ENCODE measurements at regions of chr14 and their contacts with region 1.

Region 1: GRCh38 chr14:60248697-60249318 is at the start of gene PPM1A:
- DNase-seq: peak; percentile 94 to 95
- H3K4me3 ChIP-seq: peak within 1 kb of the TSS; percentile 97
- H3K4me3 Mint-ChIP-seq: peak within 1 kb of the TSS; percentile 96
- H3K27ac Mint-ChIP-seq: peak within 1 kb of the TSS; percentile 99
- H3K4me1 ChIP-seq: peaks cover 30% of the 10 kb centered on the region
- H3K4me1 Mint-ChIP-seq: peaks cover 30% of the 10 kb centered on the region
- H3K27me3 ChIP-seq: no peaks in the 10 kb centered on the region
- H3K27me3 Mint-ChIP-seq: no peaks in the 10 kb centered on the region
- CTCF ChIP-seq: no peak
- total RNA-seq, gene PPM1A: 34.9 and 35.6 TPM in 2 replicates

Region 2: GRCh38 chr14:60188115-60188514 is 60.7 kb before region 1 on chr14:
- CTCF ChIA-PET with region 1: no interaction called
- POLR2A ChIA-PET with region 1: no interaction called
- intact Hi-C with region 1: no loop called
- DNase-seq: no peak
- H3K4me3 ChIP-seq: no peak overlapping the region
- H3K4me3 Mint-ChIP-seq: no peak overlapping the region
- H3K27ac Mint-ChIP-seq: no peak overlapping the region
- H3K4me1 ChIP-seq: no peaks in the 10 kb centered on the region
- H3K4me1 Mint-ChIP-seq: no peaks in the 10 kb centered on the region
- H3K27me3 ChIP-seq: no peaks in the 10 kb centered on the region
- H3K27me3 Mint-ChIP-seq: peaks cover 2% of the 10 kb centered on the region
- CTCF ChIP-seq: no peak

Region 3: GRCh38 chr14:60276342-60276741 is 27.5 kb after region 1 on chr14:
- CTCF ChIA-PET with region 1: interaction called, 3 read pairs
- POLR2A ChIA-PET with region 1: interaction called, 22 read pairs
- intact Hi-C with region 1: loop called (anchors 1 kb)
- DNase-seq: peak in 1 of 2 experiments; percentile 14
- H3K4me3 ChIP-seq: no peak overlapping the region
- H3K4me3 Mint-ChIP-seq: peak overlapping the region; percentile 30
- H3K27ac Mint-ChIP-seq: no peak overlapping the region
- H3K4me1 ChIP-seq: peaks cover 45% of the 10 kb centered on the region
- H3K4me1 Mint-ChIP-seq: peaks cover 40% of the 10 kb centered on the region
- H3K27me3 ChIP-seq: no peaks in the 10 kb centered on the region
- H3K27me3 Mint-ChIP-seq: no peaks in the 10 kb centered on the region
- CTCF ChIP-seq: no peak

Region 4: DNA sequence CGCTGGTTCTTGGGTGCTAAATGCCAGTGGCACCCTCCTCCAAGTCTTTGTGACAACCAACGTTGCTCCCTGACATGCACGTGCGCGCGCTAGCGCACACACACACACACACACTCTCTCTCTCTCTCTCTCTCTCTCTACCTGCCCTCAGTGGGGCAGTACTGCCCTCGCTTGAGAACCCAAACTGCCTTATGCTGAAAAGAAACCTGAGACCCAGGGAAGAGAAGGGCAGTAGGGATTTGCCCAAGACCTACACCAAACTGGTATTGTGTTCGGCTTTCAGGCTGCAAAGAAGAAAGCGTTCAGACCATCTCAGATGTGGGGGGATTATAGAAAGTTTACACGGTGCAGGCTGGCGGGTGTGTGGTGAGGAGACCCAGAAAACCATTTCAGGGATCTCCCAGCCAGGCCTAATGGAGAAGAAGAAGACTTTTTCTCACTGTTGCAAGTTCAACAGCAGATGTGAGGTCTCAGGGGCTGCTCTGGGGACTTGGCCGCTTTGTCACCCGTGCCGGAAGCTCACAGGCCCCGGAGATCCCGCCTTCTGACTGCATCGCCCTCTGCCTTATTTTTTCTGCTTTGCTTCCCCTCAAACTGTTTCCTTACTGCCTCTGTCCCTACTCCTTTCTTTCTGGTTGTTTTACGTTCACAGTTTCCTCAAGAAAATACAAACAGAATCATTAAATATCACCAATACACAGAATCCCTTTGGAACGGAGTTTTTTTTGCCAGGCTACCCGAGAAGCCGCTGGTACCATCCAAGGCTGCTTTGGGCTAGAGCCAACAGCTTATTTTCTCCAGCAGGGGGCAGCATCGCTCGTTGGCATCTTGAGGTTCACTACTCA is 82.6 kb after region 1 on chr14:
- CTCF ChIA-PET with region 1: interaction called, 4 read pairs
- POLR2A ChIA-PET with region 1: no interaction called
- intact Hi-C with region 1: loop called (anchors 5 kb)
- DNase-seq: peak; percentile 73 to 78
- H3K4me3 ChIP-seq: peak overlapping the region; percentile 43
- H3K4me3 Mint-ChIP-seq: peak overlapping the region; percentile 88
- H3K27ac Mint-ChIP-seq: peak overlapping the region; percentile 68
- H3K4me1 ChIP-seq: no peaks in the 10 kb centered on the region
- H3K4me1 Mint-ChIP-seq: no peaks in the 10 kb centered on the region
- H3K27me3 ChIP-seq: no peaks in the 10 kb centered on the region
- H3K27me3 Mint-ChIP-seq: peaks cover 7% of the 10 kb centered on the region
- CTCF ChIP-seq: peak; percentile 74 to 84

Measured in Caco-2 (cell line).